ENCODE measurements at regions of chr20 and their contacts with region 1.

Region 1: GRCh38 chr20:4091490-4092479 is 76.4 kb upstream of the RNF24 start:
- DNase-seq: peak; percentile 65
- H3K4me3 Mint-ChIP-seq: no peak overlapping the region
- H3K27ac Mint-ChIP-seq: no peak overlapping the region
- H3K4me1 Mint-ChIP-seq: peaks cover 2% of the 10 kb centered on the region
- H3K27me3 Mint-ChIP-seq: peaks cover 5% of the 10 kb centered on the region

Region 2: DNA sequence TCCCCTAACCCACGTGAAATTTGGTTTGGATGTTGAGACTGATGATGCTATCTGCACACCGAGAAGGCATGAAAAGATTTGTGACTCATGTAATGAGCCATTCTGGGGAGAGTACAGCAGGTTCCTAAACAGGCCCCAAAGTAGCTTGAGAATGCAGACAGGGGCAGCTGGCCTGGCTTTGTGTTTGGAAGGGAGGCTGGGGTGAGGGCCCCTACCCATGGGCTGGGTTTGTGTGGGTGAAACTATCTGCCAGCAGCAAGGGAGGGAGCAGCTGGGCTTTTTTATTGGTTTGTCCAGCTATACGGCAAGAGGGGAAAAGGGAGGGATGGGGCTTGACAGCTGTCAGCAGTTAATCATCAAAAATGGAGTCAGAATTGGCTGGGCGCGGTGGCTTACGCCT is 10.6 kb after region 1 on chr20:
- CTCF ChIA-PET with region 1: interaction called, 11 read pairs
- POLR2A ChIA-PET with region 1: interaction called, 5 read pairs
- intact Hi-C with region 1: no loop called
- DNase-seq: no peak
- H3K4me3 Mint-ChIP-seq: no peak overlapping the region
- H3K27ac Mint-ChIP-seq: no peak overlapping the region
- H3K4me1 Mint-ChIP-seq: peaks cover 2% of the 10 kb centered on the region
- H3K27me3 Mint-ChIP-seq: no peaks in the 10 kb centered on the region

Measured in activated CD4-positive, alpha-beta memory T cell treated with anti-CD3 and anti-CD28 coated beads for 36 hours (primary cell).